ENCODE measurements at regions of chr6 and their contacts with region 1.

Region 1: DNA sequence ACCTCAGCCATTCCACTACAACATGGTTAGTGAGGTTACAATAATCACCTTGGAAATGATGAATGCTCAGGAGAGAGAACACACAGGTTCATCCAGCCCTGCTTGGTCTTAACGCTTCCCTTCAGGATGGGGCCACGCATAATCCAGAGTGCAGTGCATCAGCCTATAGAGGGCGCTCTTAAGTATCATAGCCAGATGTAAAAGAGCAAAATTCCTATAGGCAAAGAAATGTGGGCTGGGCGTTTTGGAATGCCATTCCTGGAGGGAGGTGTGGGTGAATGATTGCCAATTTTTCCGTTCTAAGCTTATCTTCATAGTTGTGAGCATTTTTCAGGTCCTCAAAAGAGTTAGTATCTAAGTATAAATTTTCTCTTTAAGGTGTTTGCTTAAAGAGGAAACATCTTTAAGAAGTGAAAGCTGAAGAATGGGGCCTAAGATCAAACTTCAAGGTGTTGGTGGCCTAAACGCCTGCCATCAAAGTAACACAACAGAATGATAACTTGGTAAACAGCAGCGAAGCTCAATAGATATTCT is 1.8 kb downstream of the RIPOR2 start:
- DNase-seq: peak in 1 of 3 donors; percentile 35
- H3K4me3 ChIP-seq: peak overlapping the region in 2 of 7 experiments; percentile 19 to 72
- H3K27ac ChIP-seq: no peak overlapping the region
- H3K4me1 ChIP-seq: peaks cover 20 to 64% (median 33%) of the 10 kb centered on the region in 4 experiments
- H3K27me3 ChIP-seq: no peaks in the 10 kb centered on the region

Region 2: DNA sequence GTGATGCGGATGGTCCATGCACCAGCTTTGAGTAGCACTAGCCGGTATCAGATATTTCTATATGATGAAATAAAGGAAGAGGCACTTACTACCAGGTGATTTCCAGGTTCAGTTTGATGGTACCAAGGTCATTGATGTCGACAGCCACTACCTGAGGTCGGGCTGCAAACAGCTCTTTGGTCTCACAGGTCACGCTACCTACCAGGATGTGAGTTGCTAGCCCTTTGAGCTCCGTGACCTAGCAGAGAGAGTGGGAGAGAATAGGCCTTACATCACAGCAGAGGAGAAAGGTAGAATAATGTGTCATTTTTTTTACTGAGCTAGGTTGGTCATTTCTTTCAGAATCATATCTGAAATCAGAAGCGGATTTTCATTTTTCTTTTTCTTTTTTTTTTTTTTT is 84.2 kb before region 1 on chr6:
- CTCF ChIA-PET with region 1: no interaction called
- POLR2A ChIA-PET with region 1: no interaction called
- DNase-seq: no peak
- H3K4me3 ChIP-seq: no peak overlapping the region
- H3K27ac ChIP-seq: no peak overlapping the region
- H3K4me1 ChIP-seq: no peaks in the 10 kb centered on the region
- H3K27me3 ChIP-seq: no peaks in the 10 kb centered on the region

Region 3: DNA sequence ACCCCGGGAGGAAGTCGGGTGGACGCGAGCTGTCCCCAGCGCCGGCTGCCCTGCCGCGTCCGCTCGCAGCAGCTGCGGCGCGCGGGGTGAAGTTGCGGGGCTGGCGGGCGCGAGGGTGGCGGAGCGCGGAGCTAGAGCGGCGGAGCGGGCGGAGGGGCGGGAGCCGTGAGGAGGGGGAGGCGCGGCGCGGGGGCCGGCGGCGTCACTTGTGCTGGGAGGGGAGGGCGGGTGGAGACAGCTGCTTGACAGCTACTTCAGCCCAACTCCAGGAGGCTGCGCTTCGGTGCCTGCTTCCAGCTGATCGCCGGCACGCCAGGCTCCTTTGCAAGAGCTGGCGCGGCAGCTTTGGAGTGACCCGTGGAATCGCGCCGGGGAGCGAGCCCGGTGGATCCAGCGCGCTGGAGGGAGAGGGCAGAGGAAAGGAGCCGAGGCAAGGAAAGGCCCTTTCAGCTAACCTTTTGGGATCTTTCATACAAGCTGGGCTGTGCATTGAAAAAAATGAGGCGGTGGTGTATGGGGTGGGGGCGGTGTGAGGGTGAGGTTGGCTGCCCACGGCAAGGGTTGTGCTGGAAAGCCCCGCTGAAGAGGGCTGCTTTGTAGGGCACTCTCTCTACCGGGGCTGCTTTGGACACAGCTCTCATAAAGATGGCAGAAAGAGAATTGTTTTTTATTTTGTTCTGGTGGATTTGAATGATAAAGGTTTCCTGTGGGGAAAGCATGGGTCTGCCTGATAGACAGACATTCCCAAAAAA is 22.8 kb before region 1 on chr6:
- CTCF ChIA-PET with region 1: interaction called, 18 read pairs
- POLR2A ChIA-PET with region 1: no interaction called
- DNase-seq: peak; percentile 55 to 85 (median 78)
- H3K4me3 ChIP-seq: peak overlapping the region; percentile 23 to 82 (median 65)
- H3K27ac ChIP-seq: no peak overlapping the region
- H3K4me1 ChIP-seq: peaks cover 12 to 48% (median 39%) of the 10 kb centered on the region in 4 experiments
- H3K27me3 ChIP-seq: no peaks in the 10 kb centered on the region

Region 4: DNA sequence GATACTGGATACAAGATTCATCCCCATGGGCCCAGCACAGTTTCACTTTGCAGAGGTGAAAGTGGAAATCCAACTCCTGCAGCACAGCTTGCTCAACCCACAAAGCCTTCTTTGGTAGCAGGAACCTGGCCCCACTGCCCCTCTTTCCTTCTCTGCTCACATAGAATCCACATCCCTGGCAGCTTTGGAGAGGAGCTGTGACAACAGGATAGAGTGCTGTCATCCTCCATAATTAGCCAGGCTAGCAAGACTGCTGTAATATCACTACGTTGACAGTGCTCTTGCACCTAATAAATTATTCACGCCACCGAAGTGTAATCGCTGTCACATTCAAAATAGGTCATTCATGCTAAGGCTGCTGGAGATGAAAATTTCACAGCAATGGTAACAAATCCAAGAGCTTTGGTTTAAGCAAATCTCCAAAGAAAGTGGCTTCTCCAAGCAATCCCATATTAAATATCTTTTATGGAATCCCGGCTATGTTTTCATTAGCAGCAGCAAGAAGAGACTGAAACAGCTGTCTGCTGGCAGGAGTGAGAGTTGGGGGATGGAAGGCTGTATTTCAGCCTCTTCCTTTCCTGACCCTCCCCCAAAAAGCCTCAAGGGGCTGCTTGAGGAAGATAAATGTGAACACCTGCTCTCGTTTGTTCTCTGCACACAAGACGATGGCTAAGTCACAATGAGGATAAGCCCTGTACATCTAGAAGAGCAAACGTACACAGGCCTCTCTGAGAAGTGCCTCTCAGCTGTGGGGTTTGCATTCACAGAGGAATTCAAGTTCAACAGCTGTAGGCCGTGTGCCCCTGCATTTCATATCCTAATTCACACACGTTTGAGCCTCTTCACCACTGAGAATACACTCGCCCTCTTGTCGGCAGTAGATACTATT is 14.7 kb before region 1 on chr6:
- CTCF ChIA-PET with region 1: interaction called, 18 read pairs
- POLR2A ChIA-PET with region 1: no interaction called
- DNase-seq: peak in 2 of 3 donors; percentile 65 to 82
- H3K4me3 ChIP-seq: peak overlapping the region in 3 of 7 experiments; percentile 0 to 44 (median 27)
- H3K27ac ChIP-seq: peak overlapping the region in 1 of 2 experiments; percentile 28
- H3K4me1 ChIP-seq: peaks cover 23 to 40% (median 26%) of the 10 kb centered on the region in 4 experiments
- H3K27me3 ChIP-seq: no peaks in the 10 kb centered on the region

Region 5: GRCh38 chr6:24949020-24949569 is 15.2 kb after region 1 on chr6:
- CTCF ChIA-PET with region 1: interaction called, 87 read pairs
- POLR2A ChIA-PET with region 1: interaction called, 5 read pairs
- DNase-seq: peak in 2 of 3 donors; percentile 61 to 69
- H3K4me3 ChIP-seq: no peak overlapping the region
- H3K27ac ChIP-seq: peak overlapping the region in 1 of 2 experiments; percentile 62
- H3K4me1 ChIP-seq: peaks cover 31 to 47% (median 40%) of the 10 kb centered on the region in 4 experiments
- H3K27me3 ChIP-seq: no peaks in the 10 kb centered on the region

Region 6: DNA sequence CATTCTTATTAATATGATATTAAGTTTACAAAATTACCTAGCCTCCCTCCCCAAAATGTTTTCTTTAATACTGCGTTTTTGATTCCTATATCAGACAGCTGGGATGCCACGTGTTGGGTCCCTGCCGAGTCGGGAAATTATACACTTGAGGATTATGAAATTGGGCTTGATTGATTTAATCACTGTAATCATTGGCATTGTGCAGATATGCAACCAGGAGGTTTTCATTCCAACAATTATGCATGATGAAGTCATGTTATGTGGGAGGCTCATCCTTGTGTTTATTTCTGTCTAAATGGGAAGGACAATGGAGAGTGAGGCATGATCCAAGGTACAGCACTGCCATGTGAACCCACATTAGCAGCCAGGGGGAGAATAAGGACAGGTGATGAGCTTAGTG is 32.4 kb after region 1 on chr6:
- CTCF ChIA-PET with region 1: interaction called, 13 read pairs
- POLR2A ChIA-PET with region 1: no interaction called
- DNase-seq: no peak
- H3K4me3 ChIP-seq: no peak overlapping the region
- H3K27ac ChIP-seq: no peak overlapping the region
- H3K4me1 ChIP-seq: peaks cover 0 to 22% (median 15%) of the 10 kb centered on the region in 4 experiments
- H3K27me3 ChIP-seq: no peaks in the 10 kb centered on the region

Measured in common myeloid progenitor, CD34-positive (primary cell).